ENCODE measurements at regions of chr12 and their contacts with region 1.

Region 1: GRCh38 chr12:52870351-52871290 is 21.8 kb upstream of the KRT78 start:
- DNase-seq: peak; percentile 84
- H3K4me3 Mint-ChIP-seq: peak overlapping the region; percentile 14
- H3K27ac Mint-ChIP-seq: peak overlapping the region; percentile 90
- H3K4me1 Mint-ChIP-seq: peaks cover 77% of the 10 kb centered on the region
- H3K27me3 Mint-ChIP-seq: no peaks in the 10 kb centered on the region
- CTCF ChIP-seq: peak; percentile 95

Region 2: GRCh38 chr12:52860063-52860823 is 10.4 kb before region 1 on chr12:
- CTCF ChIA-PET with region 1: interaction called, 3 read pairs
- POLR2A ChIA-PET with region 1: interaction called, 45 read pairs
- intact Hi-C with region 1: no loop called
- DNase-seq: peak; percentile 83
- H3K4me3 Mint-ChIP-seq: peak overlapping the region; percentile 15
- H3K27ac Mint-ChIP-seq: peak overlapping the region; percentile 99
- H3K4me1 Mint-ChIP-seq: peaks cover 20% of the 10 kb centered on the region
- H3K27me3 Mint-ChIP-seq: no peaks in the 10 kb centered on the region
- CTCF ChIP-seq: no peak

Measured in MCF 10A (cell line).